Left cardiac atrium (tissue), 4 donors: ENCODE measurements at regions of chr14 and their contacts with region 1.

Region 1: GRCh38 chr14:85528080-85528896 is 1.7 kb upstream of the FLRT2 start:
- DNase-seq: peak; percentile 48
- ATAC-seq: peak; percentile 54 to 63

Region 2: DNA sequence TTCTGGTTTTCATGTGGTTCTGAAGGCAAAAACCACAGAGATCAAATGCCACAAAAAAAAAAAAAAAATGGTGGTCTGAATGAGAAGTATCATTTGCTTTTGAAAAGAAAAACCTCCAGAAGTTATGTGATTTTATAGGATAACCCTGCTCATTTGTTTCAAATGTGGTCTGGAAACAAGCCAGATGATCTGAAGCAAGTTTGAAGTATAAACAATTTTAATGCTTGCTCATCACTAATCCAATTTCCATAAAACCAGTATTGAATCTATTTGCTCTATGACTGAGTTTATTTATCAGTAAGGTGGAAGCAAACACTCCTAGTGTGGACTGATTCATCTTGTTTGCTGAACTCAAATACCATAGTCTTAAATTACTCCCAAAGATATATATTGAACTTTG is 405.6 kb before region 1 on chr14:
- intact Hi-C with region 1: no loop called
- DNase-seq: no peak
- ATAC-seq: no peak

Region 3: GRCh38 chr14:85415015-85415712 is 113.1 kb before region 1 on chr14:
- intact Hi-C with region 1: loop called in 1 of 2 experiments (anchors 2 kb)
- DNase-seq: peak; percentile 65
- ATAC-seq: peak; percentile 93 to 100